Spleen (tissue), 13 donors: ENCODE measurements at regions of chr5 and their contacts with region 1.

Region 1: DNA sequence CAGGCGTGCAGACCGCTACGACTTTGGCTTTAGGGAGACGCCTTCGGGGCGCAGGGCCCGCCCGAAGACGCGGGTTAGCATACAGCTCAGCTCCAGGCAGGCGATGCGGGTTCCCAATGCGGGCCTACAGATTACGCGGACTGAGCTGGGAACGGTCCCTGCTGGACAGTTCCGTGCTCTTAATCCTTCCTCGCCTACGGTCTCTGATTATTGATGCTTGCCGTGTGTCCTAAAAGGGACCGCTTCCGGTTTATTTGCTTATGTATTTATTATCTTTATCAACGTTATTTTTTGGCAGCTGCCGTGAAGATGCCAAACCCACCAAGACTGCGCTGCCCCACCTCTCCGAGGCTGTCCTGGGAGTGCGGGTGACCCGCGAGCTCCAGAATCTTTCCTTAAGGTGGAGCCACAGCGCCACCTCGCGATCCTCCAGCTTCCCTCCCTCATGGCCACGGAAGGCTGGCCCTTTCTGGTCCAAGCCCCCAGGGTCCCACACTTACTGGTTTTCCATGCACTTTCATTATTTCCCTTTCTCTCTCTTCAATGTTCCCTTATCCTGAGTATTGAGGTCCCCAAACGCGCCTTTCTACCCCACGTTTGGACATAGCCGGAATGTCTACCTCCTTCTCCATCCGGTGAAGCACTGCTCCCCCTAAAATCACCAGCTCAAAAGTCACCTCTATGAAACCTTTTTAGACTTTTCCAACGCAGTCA is 7.0 kb upstream of the EBF1 start:
- DNase-seq: peak; percentile 93
- H3K4me3 ChIP-seq: peak overlapping the region in 7 of 8 donors; percentile 24 to 70 (median 45)
- H3K27ac ChIP-seq: peak overlapping the region in 2 of 8 donors; percentile 7 to 33
- H3K4me1 ChIP-seq: peaks cover 0 to 52% (median 29%) of the 10 kb centered on the region in 6 donors
- H3K27me3 ChIP-seq: peaks cover 0 to 82% (median 25%) of the 10 kb centered on the region in 7 donors
- CTCF ChIP-seq: peak; percentile 69 to 96 (median 88)
- POLR2A ChIP-seq: no peak

Region 2: DNA sequence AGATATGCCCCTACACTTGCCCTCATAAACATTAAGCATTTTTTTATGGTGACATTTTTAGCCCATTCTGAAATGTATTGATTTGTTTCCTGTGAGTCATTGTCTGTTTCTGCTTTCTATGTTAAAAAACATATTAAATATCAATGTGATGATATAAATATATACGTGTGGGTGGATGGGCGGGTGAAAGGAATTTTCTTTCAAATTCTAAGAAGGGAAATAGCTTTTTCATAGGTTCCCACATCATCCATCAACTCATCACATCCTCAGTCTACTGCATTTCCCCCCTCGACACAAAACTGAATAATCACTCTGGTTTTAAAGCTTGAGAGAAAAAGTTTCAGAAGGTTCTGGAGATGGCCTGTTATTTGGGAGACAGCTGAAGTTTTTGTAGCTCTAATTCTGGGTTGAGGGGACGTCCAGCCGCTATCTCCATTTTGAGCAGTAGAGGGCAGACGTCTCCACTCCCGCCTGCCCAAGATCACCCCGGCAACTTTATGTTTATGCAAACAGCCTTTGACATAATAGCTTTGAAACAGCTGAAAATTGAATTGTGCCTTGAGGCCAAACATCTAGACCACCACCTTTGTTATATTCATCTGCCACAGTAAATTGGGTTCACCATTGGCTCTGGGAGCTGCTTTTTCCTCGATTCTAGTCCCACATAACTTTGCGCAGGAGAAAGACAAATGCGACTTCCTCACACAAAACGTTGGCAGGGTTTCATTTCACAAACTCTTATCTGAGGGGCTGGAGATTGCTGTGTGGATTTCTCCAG is 1031.5 kb before region 1 on chr5:
- intact Hi-C with region 1: loop called (anchors 5 kb)
- DNase-seq: no peak
- H3K4me3 ChIP-seq: peak overlapping the region in 2 of 8 donors; percentile 13 to 47
- H3K27ac ChIP-seq: no peak overlapping the region
- H3K4me1 ChIP-seq: peaks cover 0 to 18% (median 4%) of the 10 kb centered on the region in 6 donors
- H3K27me3 ChIP-seq: no peaks in the 10 kb centered on the region
- CTCF ChIP-seq: peak; percentile 34 to 83 (median 65)
- POLR2A ChIP-seq: no peak

Region 3: GRCh38 chr5:158174918-158175851 is 931.5 kb before region 1 on chr5:
- intact Hi-C with region 1: loop called (anchors 5 kb)
- DNase-seq: peak; percentile 81
- H3K4me3 ChIP-seq: no peak overlapping the region
- H3K27ac ChIP-seq: no peak overlapping the region
- H3K4me1 ChIP-seq: peaks cover 0 to 22% (median 0%) of the 10 kb centered on the region in 6 donors
- H3K27me3 ChIP-seq: no peaks in the 10 kb centered on the region
- CTCF ChIP-seq: peak; percentile 47 to 82 (median 73)
- POLR2A ChIP-seq: no peak

Region 4: DNA sequence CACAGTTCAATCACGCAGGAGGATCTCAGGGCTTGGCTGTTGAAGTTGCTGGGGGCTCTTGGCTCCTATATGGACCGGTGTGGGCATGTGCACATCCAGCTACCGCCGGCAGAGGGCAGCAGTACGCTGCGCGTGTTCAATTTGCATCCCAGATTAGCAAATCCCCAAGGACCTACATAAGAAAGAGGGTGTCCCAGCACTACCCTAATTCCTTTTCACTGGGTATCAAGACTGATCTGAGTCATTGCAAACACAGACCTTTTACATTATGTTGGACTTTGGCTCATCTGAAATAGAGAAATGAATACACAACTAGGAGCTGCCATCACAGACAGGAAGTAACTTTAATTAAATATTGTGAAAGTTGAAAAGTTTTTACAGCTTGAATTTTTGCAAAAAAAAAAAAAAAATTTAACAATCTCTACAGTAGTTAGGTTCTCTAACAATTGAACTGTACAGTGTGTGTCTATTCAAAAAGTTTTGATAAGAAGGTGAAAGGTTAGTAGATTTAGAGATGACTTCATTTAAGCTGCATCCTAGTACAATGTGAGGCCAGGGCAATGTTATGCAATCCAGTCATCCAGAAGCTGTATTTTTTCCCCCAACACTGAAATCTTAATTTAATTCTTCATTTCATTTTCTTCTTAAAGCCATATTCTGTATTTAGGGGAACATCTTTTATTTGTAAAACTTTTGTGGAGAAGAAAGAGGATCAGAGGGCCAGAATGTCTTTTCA is 411.0 kb before region 1 on chr5:
- intact Hi-C with region 1: loop called (anchors 5 kb)
- DNase-seq: peak; percentile 91
- H3K4me3 ChIP-seq: no peak overlapping the region
- H3K27ac ChIP-seq: peak overlapping the region in 6 of 8 donors; percentile 6 to 25 (median 17)
- H3K4me1 ChIP-seq: peaks cover 0 to 18% (median 11%) of the 10 kb centered on the region in 6 donors
- H3K27me3 ChIP-seq: peaks cover 0 to 6% (median 0%) of the 10 kb centered on the region in 7 donors
- CTCF ChIP-seq: peak; percentile 79 to 97 (median 94)
- POLR2A ChIP-seq: no peak